ENCODE measurements at regions of chr3 and their contacts with region 1.

Region 1: GRCh38 chr3:170180908-170181879 is at the start of gene PHC3:
- DNase-seq: peak; percentile 91 to 92 (median 91)
- H3K4me3 ChIP-seq: peak within 1 kb of the TSS; percentile 48 to 97
- H3K4me3 Mint-ChIP-seq: peak within 1 kb of the TSS; percentile 96 to 100 (median 99)
- H3K27ac ChIP-seq: peak within 1 kb of the TSS; percentile 98
- H3K27ac Mint-ChIP-seq: peak within 1 kb of the TSS; percentile 99 to 100 (median 100)
- H3K4me1 ChIP-seq: peaks cover 40% of the 10 kb centered on the region
- H3K4me1 Mint-ChIP-seq: peaks cover 23 to 41% (median 32%) of the 10 kb centered on the region in 4 donors
- H3K27me3 ChIP-seq: no peaks in the 10 kb centered on the region
- H3K27me3 Mint-ChIP-seq: no peaks in the 10 kb centered on the region
- total RNA-seq, gene PHC3: 168 to 173 TPM

Region 2: DNA sequence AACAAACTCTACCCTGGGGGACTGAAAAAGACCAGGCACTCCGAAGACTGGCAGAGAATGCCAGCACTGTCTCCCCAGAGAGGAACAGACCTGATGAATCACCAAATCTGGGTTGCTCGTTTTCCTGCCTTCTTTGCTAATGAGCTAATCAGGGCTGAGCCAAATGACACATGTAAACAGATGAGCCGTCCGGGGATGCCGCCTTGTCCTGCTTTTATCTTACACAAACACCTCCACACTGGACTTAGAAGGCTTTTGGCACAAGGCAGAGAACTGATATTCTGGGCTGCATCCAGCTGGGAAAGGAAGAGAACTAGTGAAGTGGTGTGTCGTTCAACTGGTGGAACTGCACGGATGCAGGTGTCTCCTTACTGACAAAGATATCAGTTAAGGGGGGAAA is 605.8 kb before region 1 on chr3:
- CTCF ChIA-PET with region 1: no interaction called
- POLR2A ChIA-PET with region 1: no interaction called
- intact Hi-C with region 1: no loop called
- DNase-seq: no peak
- H3K4me3 ChIP-seq: no peak overlapping the region
- H3K4me3 Mint-ChIP-seq: no peak overlapping the region
- H3K27ac ChIP-seq: no peak overlapping the region
- H3K27ac Mint-ChIP-seq: no peak overlapping the region
- H3K4me1 ChIP-seq: no peaks in the 10 kb centered on the region
- H3K4me1 Mint-ChIP-seq: no peaks in the 10 kb centered on the region
- H3K27me3 ChIP-seq: no peaks in the 10 kb centered on the region
- H3K27me3 Mint-ChIP-seq: peaks cover 7 to 8% of the 10 kb centered on the region in 2 donors

Region 3: DNA sequence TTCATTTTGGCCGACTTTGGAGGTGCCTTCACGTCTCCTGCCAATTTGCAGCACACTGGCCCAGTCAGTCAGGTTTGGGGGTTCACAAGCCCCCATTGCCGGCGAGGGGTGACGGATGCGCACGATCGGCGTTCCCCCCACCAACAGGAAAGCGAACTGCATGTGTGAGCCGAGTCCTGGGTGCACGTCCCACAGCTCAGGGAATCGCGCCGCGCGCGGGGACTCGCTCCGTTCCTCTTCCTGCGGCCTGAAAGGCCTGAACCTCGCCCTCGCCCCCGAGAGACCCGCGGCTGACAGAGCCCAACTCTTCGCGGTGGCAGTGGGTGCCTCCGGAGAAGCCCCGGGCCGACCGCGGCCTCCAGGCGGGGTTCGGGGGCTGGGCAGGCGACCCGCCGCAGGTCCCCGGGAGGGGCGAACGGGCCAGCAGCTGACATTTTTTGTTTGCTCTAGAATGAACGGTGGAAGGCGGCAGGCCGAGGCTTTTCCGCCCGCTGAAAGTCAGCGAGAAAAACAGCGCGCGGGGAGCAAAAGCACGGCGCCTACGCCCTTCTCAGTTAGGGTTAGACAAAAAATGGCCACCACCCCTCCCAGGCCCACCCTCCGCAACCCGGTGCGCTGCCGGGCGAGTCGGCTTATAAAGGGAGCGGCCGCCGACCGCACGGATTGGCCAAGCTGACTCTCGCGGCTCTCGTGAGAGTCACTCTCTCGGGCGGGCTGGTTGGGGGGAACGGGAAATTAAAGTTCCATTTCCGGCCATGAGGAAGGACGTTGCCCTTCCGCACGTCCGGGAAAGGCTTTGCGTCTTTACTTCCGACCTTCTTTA is 416.5 kb before region 1 on chr3 and contains the start of gene TERC:
- CTCF ChIA-PET with region 1: interaction called, 5 read pairs
- POLR2A ChIA-PET with region 1: interaction called, 31 read pairs
- intact Hi-C with region 1: loop called (anchors 1 kb)
- DNase-seq: peak; percentile 93 to 96 (median 95)
- H3K4me3 ChIP-seq: peak within 1 kb of the TSS; percentile 36 to 70
- H3K4me3 Mint-ChIP-seq: peak within 1 kb of the TSS; percentile 94 to 98 (median 98)
- H3K27ac ChIP-seq: peak within 1 kb of the TSS; percentile 87
- H3K27ac Mint-ChIP-seq: peak within 1 kb of the TSS; percentile 95 to 99 (median 98)
- H3K4me1 ChIP-seq: peaks cover 23% of the 10 kb centered on the region
- H3K4me1 Mint-ChIP-seq: peaks cover 15 to 43% (median 23%) of the 10 kb centered on the region in 4 donors
- H3K27me3 ChIP-seq: no peaks in the 10 kb centered on the region
- H3K27me3 Mint-ChIP-seq: no peaks in the 10 kb centered on the region
- total RNA-seq, gene TERC: 15.6 to 15.7 TPM

Region 4: DNA sequence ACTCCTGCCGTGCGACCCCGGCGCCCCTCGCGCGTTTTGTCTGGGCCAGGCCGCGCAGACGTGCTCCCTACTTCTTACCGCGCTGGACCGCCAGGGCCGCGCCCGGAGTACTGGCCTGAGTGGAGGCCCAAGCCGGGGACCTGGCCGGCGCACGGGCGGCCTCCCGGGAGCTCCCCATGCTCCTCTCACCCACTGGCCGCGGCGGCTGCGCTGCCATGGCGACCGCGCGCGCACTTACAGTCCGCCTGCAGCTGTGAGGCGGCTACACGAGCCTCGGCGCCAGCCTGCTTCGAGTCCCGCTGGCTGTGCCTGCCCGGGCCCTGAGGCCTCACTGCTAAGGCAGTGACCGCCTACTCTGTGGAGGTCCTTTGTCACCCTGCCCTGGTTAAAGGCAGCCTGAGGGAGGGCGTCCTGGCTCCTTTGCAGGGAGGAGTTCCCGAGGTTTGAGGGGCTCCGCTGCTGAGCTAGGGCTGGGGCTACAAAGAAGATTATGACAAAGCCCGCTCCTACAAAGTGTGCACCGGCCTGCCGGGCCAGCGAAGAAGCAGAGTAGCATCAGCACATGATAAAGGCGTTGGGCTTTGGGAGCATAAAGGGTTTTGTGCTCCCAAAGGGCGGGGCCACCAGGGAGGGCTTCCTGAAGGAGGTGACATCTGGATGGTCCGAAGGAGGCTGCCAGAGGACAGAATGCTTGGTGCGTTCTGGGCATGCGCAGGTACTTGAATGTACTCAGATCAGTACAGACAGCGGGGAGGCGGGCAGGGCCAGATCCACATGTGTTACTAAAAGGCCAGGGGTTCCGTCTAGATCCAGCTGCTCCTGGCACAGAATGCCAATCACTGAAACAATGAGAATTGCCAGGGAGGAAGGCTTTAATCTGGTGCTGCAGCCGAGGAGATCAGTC is 368.6 kb before region 1 on chr3 and contains the starts of genes LRRC34 and LRRIQ4:
- CTCF ChIA-PET with region 1: no interaction called
- POLR2A ChIA-PET with region 1: no interaction called
- intact Hi-C with region 1: loop called (anchors 5 kb)
- DNase-seq: peak; percentile 45 to 68 (median 55)
- H3K4me3 ChIP-seq: peak within 1 kb of the TSS; percentile 65 to 80
- H3K4me3 Mint-ChIP-seq: peak within 1 kb of the TSS; percentile 79 to 98 (median 86)
- H3K27ac ChIP-seq: peak within 1 kb of the TSS; percentile 40
- H3K27ac Mint-ChIP-seq: peak within 1 kb of the TSS; percentile 55 to 87 (median 65)
- H3K4me1 ChIP-seq: peaks cover 21% of the 10 kb centered on the region
- H3K4me1 Mint-ChIP-seq: peaks cover 17 to 29% (median 19%) of the 10 kb centered on the region in 4 donors
- H3K27me3 ChIP-seq: no peaks in the 10 kb centered on the region
- H3K27me3 Mint-ChIP-seq: peaks cover 0 to under 1% of the 10 kb centered on the region in 2 donors
- total RNA-seq, gene LRRC34: 0.33 to 0.47 TPM
- total RNA-seq, gene LRRIQ4: not detected

Region 5: DNA sequence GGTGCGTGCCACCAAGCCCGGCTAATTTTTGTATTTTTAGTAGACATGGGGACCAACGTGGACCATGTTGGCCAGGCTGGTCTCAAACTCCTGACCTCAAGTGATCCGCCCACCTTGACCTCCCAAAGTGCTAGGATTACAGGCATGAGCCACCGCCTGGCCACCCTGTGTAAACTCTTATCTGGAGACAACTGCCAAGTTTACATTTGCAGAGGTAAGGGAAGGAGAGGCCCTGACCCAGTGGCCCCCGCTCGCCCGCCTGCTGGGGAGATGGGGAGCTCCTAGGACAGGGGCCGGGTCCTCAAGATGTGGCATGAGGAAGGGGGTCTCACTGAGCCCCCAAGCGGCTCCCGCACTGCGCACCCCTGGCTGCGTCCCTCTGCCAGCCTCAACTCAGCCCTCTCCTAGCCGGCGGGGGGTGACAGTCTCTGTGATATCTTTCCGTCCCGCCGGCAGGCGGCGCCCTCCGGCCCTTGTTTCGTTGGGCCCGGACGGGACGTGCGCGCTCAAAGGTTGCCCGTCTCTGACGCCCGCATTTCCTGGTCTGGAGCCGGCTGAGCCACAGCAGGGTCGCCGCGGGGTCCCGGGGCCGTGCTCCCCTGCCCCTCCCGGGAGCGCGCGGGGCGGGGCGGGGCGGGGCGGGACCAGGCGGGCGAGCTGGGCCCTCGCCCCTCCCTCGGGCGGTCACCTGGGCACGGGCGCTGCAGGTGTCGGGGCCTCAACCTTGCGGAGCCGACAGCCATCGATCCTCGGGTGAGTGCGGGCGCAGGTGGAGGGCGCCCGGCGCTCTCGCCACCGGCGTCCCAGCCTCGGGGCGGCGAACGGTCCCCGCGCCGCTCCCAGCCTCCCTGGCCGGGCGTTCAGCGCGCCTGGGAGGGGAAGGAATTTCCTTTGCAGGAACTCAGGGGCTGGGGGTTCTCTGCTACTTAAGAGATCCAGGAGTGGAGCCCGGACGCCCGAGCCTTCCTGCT is 143.4 kb before region 1 on chr3 and contains the start of gene GPR160:
- CTCF ChIA-PET with region 1: no interaction called
- POLR2A ChIA-PET with region 1: no interaction called
- intact Hi-C with region 1: loop called (anchors 1 kb)
- DNase-seq: peak; percentile 75 to 82 (median 79)
- H3K4me3 ChIP-seq: peak within 1 kb of the TSS; percentile 39 to 77
- H3K4me3 Mint-ChIP-seq: peak within 1 kb of the TSS; percentile 84 to 92 (median 88)
- H3K27ac ChIP-seq: peak within 1 kb of the TSS; percentile 41
- H3K27ac Mint-ChIP-seq: peak within 1 kb of the TSS; percentile 25 to 90 (median 79)
- H3K4me1 ChIP-seq: peaks cover 21% of the 10 kb centered on the region
- H3K4me1 Mint-ChIP-seq: peaks cover 16 to 38% (median 29%) of the 10 kb centered on the region in 4 donors
- H3K27me3 ChIP-seq: no peaks in the 10 kb centered on the region
- H3K27me3 Mint-ChIP-seq: no peaks in the 10 kb centered on the region
- total RNA-seq, gene GPR160: 13.1 to 14.9 TPM

Region 6: DNA sequence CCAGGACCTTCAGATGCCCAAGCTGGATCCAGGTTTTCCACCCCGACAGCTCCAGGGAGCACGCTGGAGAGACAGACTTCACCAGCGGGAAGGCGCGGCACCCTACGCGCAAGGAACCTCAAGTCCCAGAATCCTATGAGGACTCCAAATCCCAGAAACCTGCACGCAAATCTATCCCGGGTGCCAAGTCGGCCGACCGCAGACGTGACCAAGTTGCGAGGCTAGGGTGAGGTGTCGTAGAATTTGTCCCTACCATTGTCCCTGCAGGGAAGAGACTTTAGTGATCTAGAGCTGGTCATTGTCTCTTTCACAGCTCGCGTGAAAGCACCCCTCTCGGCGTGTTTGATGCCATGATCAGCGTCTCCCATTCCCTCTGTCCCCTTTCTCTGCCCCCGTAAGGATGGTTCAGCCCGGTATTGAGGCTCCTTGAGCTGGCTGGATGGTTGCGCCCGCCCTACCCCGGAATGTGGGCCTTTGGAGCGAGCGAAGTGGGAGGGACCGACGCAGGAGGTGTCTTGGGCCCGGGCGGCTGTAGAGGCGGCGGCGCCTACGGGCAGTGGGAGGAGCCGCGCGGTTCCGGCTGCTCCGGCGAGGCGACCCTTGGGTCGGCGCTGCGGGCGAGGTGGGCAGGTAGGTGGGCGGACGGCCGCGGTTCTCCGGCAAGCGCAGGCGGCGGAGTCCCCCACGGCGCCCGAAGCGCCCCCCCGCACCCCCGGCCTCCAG is 40.9 kb after region 1 on chr3 and contains the start of gene PRKCI:
- CTCF ChIA-PET with region 1: no interaction called
- POLR2A ChIA-PET with region 1: interaction called, 39 read pairs
- intact Hi-C with region 1: loop called (anchors 1 kb)
- DNase-seq: peak; percentile 86 to 89 (median 88)
- H3K4me3 ChIP-seq: peak within 1 kb of the TSS; percentile 91 to 97
- H3K4me3 Mint-ChIP-seq: peak within 1 kb of the TSS; percentile 91 to 99 (median 94)
- H3K27ac ChIP-seq: peak within 1 kb of the TSS; percentile 72
- H3K27ac Mint-ChIP-seq: peak within 1 kb of the TSS; percentile 92 to 99 (median 95)
- H3K4me1 ChIP-seq: peaks cover 25% of the 10 kb centered on the region
- H3K4me1 Mint-ChIP-seq: peaks cover 24 to 39% (median 29%) of the 10 kb centered on the region in 4 donors
- H3K27me3 ChIP-seq: no peaks in the 10 kb centered on the region
- H3K27me3 Mint-ChIP-seq: no peaks in the 10 kb centered on the region
- total RNA-seq, gene PRKCI: 18.0 to 27.7 TPM

Region 7: GRCh38 chr3:170869645-170870593 is 688.7 kb after region 1 on chr3 and contains the start of gene RPL22L1:
- CTCF ChIA-PET with region 1: no interaction called
- POLR2A ChIA-PET with region 1: interaction called, 4 read pairs
- intact Hi-C with region 1: loop called (anchors 5 kb)
- DNase-seq: peak; percentile 92 to 94 (median 94)
- H3K4me3 ChIP-seq: peak within 1 kb of the TSS; percentile 76 to 92
- H3K4me3 Mint-ChIP-seq: peak within 1 kb of the TSS; percentile 91 to 98 (median 96)
- H3K27ac ChIP-seq: peak within 1 kb of the TSS; percentile 82
- H3K27ac Mint-ChIP-seq: peak within 1 kb of the TSS; percentile 92 to 99 (median 98)
- H3K4me1 ChIP-seq: peaks cover 34% of the 10 kb centered on the region
- H3K4me1 Mint-ChIP-seq: peaks cover 12 to 36% (median 24%) of the 10 kb centered on the region in 4 donors
- H3K27me3 ChIP-seq: no peaks in the 10 kb centered on the region
- H3K27me3 Mint-ChIP-seq: no peaks in the 10 kb centered on the region
- total RNA-seq, gene RPL22L1: 31.9 to 32.3 TPM

Measured in CD4-positive, alpha-beta memory T cell (primary cell).